ENCODE measurements at regions of chr3 and their contacts with region 1.

Region 1: GRCh38 chr3:19866751-19867347 is 67.2 kb downstream of the EFHB start:
- DNase-seq: no peak
- ATAC-seq: peak in 2 of 4 donors; percentile 55 to 71
- H3K4me3 ChIP-seq: no peak overlapping the region
- H3K27ac ChIP-seq: no peak overlapping the region
- H3K4me1 ChIP-seq: no peaks in the 10 kb centered on the region
- H3K27me3 ChIP-seq: no peaks in the 10 kb centered on the region
- CTCF ChIP-seq: peak; percentile 75

Region 2: GRCh38 chr3:18847583-18848197 is 1019.2 kb before region 1 on chr3:
- intact Hi-C with region 1: loop called in 1 of 2 experiments (anchors 5 kb)
- DNase-seq: no peak
- ATAC-seq: no peak
- H3K4me3 ChIP-seq: no peak overlapping the region
- H3K27ac ChIP-seq: no peak overlapping the region
- H3K4me1 ChIP-seq: no peaks in the 10 kb centered on the region
- H3K27me3 ChIP-seq: no peaks in the 10 kb centered on the region
- CTCF ChIP-seq: no peak

Region 3: GRCh38 chr3:19046440-19046839 is 820.4 kb before region 1 on chr3:
- intact Hi-C with region 1: loop called in 1 of 2 experiments (anchors 5 kb)
- DNase-seq: no peak
- ATAC-seq: no peak
- H3K4me3 ChIP-seq: no peak overlapping the region
- H3K27ac ChIP-seq: no peak overlapping the region
- H3K4me1 ChIP-seq: no peaks in the 10 kb centered on the region
- H3K27me3 ChIP-seq: no peaks in the 10 kb centered on the region
- CTCF ChIP-seq: peak; percentile 14

Region 4: GRCh38 chr3:19293295-19293694 is 573.6 kb before region 1 on chr3:
- intact Hi-C with region 1: no loop called
- DNase-seq: no peak
- ATAC-seq: no peak
- H3K4me3 ChIP-seq: no peak overlapping the region
- H3K27ac ChIP-seq: no peak overlapping the region
- H3K4me1 ChIP-seq: no peaks in the 10 kb centered on the region
- H3K27me3 ChIP-seq: no peaks in the 10 kb centered on the region
- CTCF ChIP-seq: no peak

Region 5: DNA sequence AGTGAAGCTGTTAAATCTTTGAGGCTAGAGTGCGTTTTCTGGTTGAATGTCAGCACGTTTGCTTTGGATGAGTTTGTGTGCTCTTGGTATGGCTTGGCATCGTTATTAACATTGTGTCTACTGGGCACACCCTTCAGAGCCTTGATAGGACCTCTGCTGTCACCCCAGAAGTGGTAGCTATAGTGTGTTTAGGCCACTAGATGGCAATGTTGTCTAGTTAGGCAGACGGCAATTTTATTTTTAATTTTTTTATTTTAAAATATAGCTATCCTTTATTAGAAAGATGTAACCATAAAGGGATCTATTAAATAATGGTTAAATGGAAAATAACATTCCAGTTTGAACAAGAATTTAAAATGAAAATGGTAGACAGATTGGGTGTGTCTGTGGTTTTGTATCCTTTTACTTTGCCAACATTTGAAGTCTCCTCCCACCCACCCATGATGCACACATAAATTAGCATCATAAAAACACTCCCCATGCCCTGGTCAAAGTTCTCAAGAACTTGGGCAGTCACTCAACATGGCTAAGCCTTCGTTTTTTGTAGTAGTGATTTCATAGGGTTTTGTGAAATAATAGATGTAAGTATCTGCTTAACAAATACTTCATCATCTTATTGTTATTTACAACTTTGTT is 517.8 kb before region 1 on chr3:
- intact Hi-C with region 1: loop called (anchors 5 to 10 kb)
- DNase-seq: no peak
- ATAC-seq: peak in 2 of 4 donors; percentile 56 to 66
- H3K4me3 ChIP-seq: no peak overlapping the region
- H3K27ac ChIP-seq: no peak overlapping the region
- H3K4me1 ChIP-seq: no peaks in the 10 kb centered on the region
- H3K27me3 ChIP-seq: no peaks in the 10 kb centered on the region
- CTCF ChIP-seq: peak; percentile 66